Psoas muscle (tissue), 8 donors: ENCODE measurements at regions of chr17 and their contacts with region 1.

Region 1: GRCh38 chr17:69335058-69335457 is 8.1 kb upstream of the ABCA5 start:
- DNase-seq: no peak
- ATAC-seq: peak; percentile 78 to 90 (median 84)
- H3K4me3 ChIP-seq: peak overlapping the region; percentile 20
- H3K27ac ChIP-seq: peak overlapping the region; percentile 20
- H3K4me1 ChIP-seq: peaks cover under 1% of the 10 kb centered on the region
- H3K27me3 ChIP-seq: no peaks in the 10 kb centered on the region
- CTCF ChIP-seq: peak; percentile 76

Region 2: DNA sequence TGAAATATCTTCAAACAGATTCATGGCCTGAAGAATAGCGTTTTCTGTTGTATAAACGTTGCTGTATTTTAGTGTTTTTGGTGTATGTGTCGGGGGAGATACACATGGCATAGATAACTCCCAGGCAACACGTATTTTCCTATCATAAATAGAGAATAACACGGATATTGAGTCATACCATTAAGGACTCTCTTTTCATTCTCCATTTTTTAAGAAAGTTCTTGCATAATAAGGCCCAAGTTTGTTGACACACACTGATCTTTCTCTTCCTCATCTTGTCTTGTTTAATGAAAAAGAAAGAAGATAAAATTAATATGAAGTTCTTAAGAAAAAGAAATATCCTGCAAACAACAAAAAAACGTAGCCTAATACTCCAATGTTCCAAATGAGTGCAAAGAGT is 393.3 kb before region 1 on chr17:
- intact Hi-C with region 1: no loop called
- DNase-seq: no peak
- ATAC-seq: no peak
- H3K4me3 ChIP-seq: no peak overlapping the region
- H3K27ac ChIP-seq: no peak overlapping the region
- H3K4me1 ChIP-seq: no peaks in the 10 kb centered on the region
- H3K27me3 ChIP-seq: no peaks in the 10 kb centered on the region
- CTCF ChIP-seq: no peak

Region 3: DNA sequence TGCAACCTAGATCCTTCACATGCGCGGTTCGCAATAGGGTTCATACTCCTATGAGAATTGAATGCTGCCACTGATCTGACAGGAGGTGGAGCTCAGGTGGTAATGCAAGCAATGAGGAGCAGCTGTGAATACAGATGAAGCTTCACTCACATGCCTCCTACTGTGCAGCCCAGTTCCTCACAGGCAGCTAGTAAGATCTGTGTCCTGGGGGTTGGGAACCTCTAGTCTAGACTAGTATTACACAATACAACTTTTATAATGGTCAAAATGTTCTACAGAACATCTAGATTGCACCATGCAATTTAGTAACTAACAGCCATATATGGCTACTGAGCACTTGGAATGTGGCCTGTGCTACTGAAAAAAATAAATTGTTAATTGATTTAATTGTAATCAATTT is 34.8 kb before region 1 on chr17:
- intact Hi-C with region 1: no loop called
- DNase-seq: no peak
- ATAC-seq: peak in 3 of 4 donors; percentile 45 to 70 (median 65)
- H3K4me3 ChIP-seq: no peak overlapping the region
- H3K27ac ChIP-seq: no peak overlapping the region
- H3K4me1 ChIP-seq: no peaks in the 10 kb centered on the region
- H3K27me3 ChIP-seq: no peaks in the 10 kb centered on the region
- CTCF ChIP-seq: no peak

Region 4: DNA sequence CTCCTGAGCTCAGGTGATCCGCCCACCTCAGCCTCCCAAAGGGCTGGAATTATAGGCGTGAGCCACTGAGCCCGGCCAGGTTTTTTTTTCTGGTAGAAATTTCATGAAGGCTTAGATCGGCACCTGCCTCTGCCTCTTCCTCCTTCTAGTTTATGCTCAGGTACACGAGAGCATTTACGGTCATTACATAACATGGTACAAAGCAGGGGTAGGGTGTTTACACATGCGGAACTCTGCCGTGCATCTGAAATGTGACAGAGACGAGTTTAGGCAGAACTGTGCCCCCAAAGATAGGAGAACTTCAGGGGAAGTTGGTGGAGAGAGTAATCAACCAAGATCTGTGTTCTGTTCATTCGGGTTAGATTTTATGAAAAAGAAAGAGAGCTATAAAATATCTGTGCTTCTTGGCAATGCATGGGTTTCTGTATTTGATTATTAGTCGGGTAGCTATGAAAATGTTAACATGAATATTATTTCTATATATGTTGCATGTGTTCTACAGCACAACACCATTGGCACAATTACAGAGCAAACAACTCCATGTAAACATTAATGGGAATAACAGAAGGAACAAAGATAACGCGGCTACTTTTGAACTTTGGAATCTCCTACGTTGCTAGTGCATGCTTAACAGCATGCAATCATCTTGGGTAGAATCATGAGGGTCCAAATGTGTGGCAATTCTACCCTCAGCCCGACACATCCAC is 55.9 kb after region 1 on chr17:
- intact Hi-C with region 1: loop called in 1 of 2 experiments (anchors 10 kb)
- DNase-seq: no peak
- ATAC-seq: no peak
- H3K4me3 ChIP-seq: no peak overlapping the region
- H3K27ac ChIP-seq: no peak overlapping the region
- H3K4me1 ChIP-seq: no peaks in the 10 kb centered on the region
- H3K27me3 ChIP-seq: no peaks in the 10 kb centered on the region
- CTCF ChIP-seq: no peak